Pancreas (tissue), 10 donors: ENCODE measurements at regions of chr5 and their contacts with region 1.

Region 1: DNA sequence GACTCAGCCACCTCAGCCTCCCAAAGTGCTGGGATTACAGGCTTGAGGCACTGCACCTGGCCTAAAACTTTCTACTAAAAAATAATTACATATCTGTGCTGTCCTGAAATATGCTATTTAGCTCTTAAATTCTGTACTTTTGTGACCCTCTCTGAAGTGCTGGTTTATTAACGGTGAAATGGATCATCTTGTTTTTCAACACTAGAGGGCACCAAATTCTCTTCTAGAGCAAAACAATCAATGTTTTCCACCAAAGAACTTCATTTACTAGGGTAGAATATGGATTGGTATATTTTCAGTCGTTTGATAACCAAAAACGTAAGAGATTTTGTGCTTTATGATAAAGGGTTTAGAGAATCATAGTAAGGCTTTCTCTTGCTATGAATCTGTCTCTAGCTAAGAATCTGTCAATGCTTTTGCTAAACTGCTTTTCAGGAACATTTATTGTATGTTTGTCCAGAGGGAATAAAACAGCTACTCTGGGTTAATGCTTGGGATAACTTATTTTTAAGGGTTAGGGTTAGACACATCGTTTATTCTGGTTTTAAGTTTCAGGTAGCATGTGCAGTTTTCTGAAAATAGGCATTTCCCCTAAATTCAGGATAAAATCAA is 63.6 kb downstream of the RNF180 start:
- DNase-seq: no peak
- ATAC-seq: peak in 3 of 4 donors; percentile 63
- H3K4me3 ChIP-seq: no peak overlapping the region
- H3K27ac ChIP-seq: no peak overlapping the region
- H3K4me1 ChIP-seq: no peaks in the 10 kb centered on the region
- H3K27me3 ChIP-seq: no peaks in the 10 kb centered on the region
- CTCF ChIP-seq: peak; percentile 47 to 60 (median 52)

Region 2: DNA sequence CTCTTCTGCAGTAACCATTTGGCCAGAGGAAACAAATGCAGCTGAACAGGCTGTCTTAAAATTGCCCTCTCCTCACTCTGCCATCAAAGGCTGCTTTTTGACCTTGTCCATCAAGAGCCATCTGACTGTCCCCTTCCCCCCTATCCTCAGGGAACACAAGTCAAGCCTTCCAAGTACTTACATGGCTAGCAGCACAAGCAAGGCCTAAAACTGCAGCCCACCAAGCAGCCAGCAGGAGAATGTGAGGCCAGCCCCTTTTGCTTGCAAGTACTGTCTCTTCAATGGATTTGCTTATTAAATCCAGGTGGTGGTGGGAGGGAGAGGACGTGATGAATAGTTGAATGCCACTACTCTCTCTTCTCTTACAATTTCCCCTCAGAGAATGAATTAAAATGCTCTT is 350.5 kb before region 1 on chr5:
- intact Hi-C with region 1: no loop called
- DNase-seq: no peak
- ATAC-seq: no peak
- H3K4me3 ChIP-seq: no peak overlapping the region
- H3K27ac ChIP-seq: no peak overlapping the region
- H3K4me1 ChIP-seq: no peaks in the 10 kb centered on the region
- H3K27me3 ChIP-seq: no peaks in the 10 kb centered on the region
- CTCF ChIP-seq: no peak

Region 3: GRCh38 chr5:64108675-64109074 is 120.6 kb before region 1 on chr5:
- intact Hi-C with region 1: no loop called
- DNase-seq: no peak
- ATAC-seq: no peak
- H3K4me3 ChIP-seq: no peak overlapping the region
- H3K27ac ChIP-seq: no peak overlapping the region
- H3K4me1 ChIP-seq: no peaks in the 10 kb centered on the region
- H3K27me3 ChIP-seq: no peaks in the 10 kb centered on the region
- CTCF ChIP-seq: no peak

Region 4: DNA sequence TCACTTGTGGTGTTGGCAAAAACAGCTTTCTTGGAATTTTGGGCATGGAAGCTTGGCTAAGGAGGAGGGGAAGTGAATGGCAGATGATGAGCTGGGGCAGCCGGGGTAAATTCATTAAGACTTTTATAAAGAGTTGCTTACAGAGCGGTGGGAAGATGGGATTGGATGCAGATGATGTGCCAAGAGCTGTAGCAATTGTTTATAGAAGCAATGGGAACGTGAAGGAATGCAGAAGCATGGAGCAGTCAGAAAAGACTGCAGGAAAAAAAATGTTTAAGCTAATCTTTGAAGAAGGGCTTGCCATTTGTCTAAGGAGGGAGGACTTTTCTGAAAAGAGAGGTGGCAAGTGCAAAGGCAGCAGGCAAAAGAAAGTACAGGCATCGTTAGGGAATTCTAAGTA is 374.4 kb after region 1 on chr5:
- intact Hi-C with region 1: loop called in 2 of 3 experiments (anchors 10 kb)
- DNase-seq: no peak
- ATAC-seq: no peak
- H3K4me3 ChIP-seq: no peak overlapping the region
- H3K27ac ChIP-seq: no peak overlapping the region
- H3K4me1 ChIP-seq: no peaks in the 10 kb centered on the region
- H3K27me3 ChIP-seq: no peaks in the 10 kb centered on the region
- CTCF ChIP-seq: no peak